Mammary epithelial cell (primary cell): ENCODE measurements at regions of chr4 and their contacts with region 1.

Region 1: DNA sequence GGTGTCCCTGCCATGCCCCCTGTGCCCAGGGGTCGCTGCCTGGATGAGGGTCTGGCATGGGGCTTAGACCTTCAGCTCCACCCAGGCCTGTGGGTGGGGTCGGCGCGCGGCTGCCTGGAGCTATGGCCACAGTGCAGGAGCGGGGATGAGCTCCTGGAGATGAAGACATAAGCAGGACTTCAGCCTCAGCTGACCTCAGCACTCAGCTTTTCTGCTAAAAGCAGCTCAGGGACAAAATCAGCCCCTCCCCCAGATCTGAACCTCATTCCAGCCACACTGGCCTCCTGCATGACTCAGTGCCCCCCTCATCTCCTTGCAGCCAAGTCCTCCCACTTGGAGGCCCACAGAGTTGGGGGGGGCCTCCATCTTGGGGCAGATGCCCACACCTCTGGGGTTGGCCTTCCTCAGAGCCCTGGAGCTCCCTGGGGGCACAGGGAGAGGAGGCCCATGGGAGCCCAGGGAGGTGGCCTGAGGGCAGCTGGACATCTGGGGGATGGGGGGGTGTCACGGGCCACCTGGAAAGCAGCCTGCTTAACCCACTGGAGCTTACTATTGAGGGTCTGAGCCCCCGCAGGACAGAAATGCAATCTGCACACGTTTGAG is 19.4 kb upstream of the CPLX1 start:
- DNase-seq: no peak
- H3K4me3 ChIP-seq: no peak overlapping the region
- H3K27ac ChIP-seq: no peak overlapping the region
- H3K4me1 ChIP-seq: no peaks in the 10 kb centered on the region
- H3K27me3 ChIP-seq: no peaks in the 10 kb centered on the region
- CTCF ChIP-seq: no peak

Region 2: GRCh38 chr4:624705-625590 is 220.4 kb before region 1 on chr4 and contains the start of gene PDE6B:
- CTCF ChIA-PET with region 1: no interaction called
- dilution Hi-C with region 1: loop called (anchors 5 kb)
- in situ Hi-C with region 1: no loop called
- intact Hi-C with region 1: no loop called
- DNase-seq: no peak
- H3K4me3 ChIP-seq: no peak within 1 kb of the TSS
- H3K27ac ChIP-seq: no peak within 1 kb of the TSS
- H3K4me1 ChIP-seq: no peaks in the 10 kb centered on the region
- H3K27me3 ChIP-seq: no peaks in the 10 kb centered on the region
- CTCF ChIP-seq: no peak
- total RNA-seq, gene PDE6B: 3.2 TPM in 1 of 2 donors, not detected in the other

Region 3: GRCh38 chr4:705278-706082 is 139.9 kb before region 1 on chr4 and contains the start of gene PCGF3:
- CTCF ChIA-PET with region 1: no interaction called
- dilution Hi-C with region 1: no loop called
- in situ Hi-C with region 1: no loop called
- intact Hi-C with region 1: no loop called
- DNase-seq: peak; percentile 88
- H3K4me3 ChIP-seq: peak within 1 kb of the TSS; percentile 80 to 98 (median 86)
- H3K27ac ChIP-seq: peak within 1 kb of the TSS; percentile 85
- H3K4me1 ChIP-seq: peaks cover 14% of the 10 kb centered on the region
- H3K27me3 ChIP-seq: no peaks in the 10 kb centered on the region
- CTCF ChIP-seq: no peak
- total RNA-seq, gene PCGF3: 35.0 to 38.2 TPM

Region 4: DNA sequence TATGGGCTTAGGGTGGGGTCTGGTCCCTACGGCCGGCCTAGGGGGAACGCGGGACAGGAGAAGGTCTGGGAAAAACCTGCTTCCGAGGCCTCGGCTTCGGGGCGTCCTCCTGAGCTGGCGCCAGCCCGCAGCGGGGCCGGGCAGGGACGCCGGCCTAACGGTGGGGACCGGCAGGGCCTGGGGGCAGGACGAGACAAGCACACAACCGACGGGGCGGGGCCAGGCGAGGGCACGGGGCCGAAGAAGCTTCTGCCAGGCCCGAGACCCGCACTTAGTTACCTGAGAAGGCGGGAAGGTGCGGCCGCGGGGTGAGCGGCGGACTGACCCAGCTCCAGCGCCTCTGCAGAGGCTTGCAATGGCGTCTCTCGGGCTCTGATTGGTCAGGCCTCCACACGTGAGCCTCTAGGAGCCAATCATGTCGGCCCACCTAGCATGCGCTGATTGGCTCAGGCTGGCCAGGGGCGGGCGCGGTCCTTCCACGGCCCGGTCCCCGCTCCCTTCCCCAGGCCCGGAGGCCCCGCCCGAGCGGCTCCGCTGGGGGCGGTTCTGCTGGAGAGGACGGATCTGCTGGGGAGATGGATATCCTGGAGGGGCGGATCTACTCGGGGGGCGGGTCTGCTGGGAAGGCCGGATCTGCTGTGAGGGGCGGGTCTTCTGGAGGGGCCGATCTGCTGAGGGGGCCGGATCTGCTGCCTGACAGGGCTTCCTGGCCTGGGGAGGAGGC is 63.7 kb before region 1 on chr4:
- CTCF ChIA-PET with region 1: no interaction called
- dilution Hi-C with region 1: loop called (anchors 5 kb)
- in situ Hi-C with region 1: no loop called
- intact Hi-C with region 1: no loop called
- DNase-seq: peak; percentile 100
- H3K4me3 ChIP-seq: peak overlapping the region; percentile 77 to 92 (median 91)
- H3K27ac ChIP-seq: peak overlapping the region; percentile 80
- H3K4me1 ChIP-seq: peaks cover 17% of the 10 kb centered on the region
- H3K27me3 ChIP-seq: peaks cover under 1% of the 10 kb centered on the region
- CTCF ChIP-seq: no peak

Region 5: GRCh38 chr4:931960-932712 is 86.8 kb after region 1 on chr4 and contains the starts of genes GAK and TMEM175:
- CTCF ChIA-PET with region 1: no interaction called
- dilution Hi-C with region 1: loop called (anchors 5 kb)
- in situ Hi-C with region 1: no loop called
- intact Hi-C with region 1: no loop called
- DNase-seq: peak; percentile 96
- H3K4me3 ChIP-seq: peak within 1 kb of the TSS; percentile 43 to 98 (median 98)
- H3K27ac ChIP-seq: peak within 1 kb of the TSS; percentile 63
- H3K4me1 ChIP-seq: peaks cover 21% of the 10 kb centered on the region
- H3K27me3 ChIP-seq: no peaks in the 10 kb centered on the region
- CTCF ChIP-seq: no peak
- total RNA-seq, gene GAK: 59.5 to 109 TPM
- total RNA-seq, gene TMEM175: 12.0 to 21.5 TPM

Region 6: DNA sequence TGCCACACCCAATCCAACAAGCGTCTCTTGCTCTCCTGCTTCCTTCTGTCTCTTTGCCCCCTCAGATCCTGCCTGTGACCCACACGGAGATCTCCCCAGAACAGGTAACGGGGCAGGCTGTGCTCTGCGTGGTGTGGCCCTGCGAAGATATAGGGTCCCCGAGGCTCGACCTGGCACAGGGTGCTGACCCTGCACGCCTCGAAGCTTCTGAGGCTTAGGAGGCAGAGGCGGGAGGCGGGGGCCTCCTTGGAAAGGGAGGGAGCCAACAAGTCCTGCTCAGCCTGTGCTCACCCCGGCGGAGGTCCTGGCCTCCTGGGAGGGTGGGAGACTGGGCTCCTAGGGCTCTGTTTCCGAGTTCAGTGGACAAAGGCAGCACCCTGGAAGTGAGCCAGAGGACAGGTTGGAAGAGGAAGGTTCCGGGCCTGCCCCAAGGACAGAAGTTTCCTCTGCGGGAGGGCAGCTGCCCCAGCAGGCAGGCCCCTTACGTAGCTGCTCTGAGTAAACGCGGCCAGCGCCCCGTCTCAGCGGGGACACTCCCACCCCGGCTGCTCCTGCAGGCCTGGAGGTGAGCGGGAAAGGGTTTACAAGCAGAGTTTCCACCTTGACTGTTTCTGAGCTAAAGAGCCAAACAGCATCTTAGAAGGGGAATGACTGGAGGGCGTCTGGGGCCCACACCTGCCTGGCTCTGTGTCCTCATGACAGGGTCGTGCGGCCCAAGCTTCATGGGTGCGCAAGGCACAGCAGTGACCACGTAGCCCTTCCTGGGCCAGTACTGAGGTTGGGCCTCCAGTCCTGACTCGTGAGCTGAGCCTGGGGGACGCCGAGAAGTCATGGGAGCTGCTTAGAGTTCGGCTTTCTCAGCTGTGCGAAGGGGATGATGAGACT is 103.0 kb after region 1 on chr4:
- CTCF ChIA-PET with region 1: no interaction called
- dilution Hi-C with region 1: no loop called
- in situ Hi-C with region 1: no loop called
- intact Hi-C with region 1: no loop called
- DNase-seq: no peak
- H3K4me3 ChIP-seq: no peak overlapping the region
- H3K27ac ChIP-seq: no peak overlapping the region
- H3K4me1 ChIP-seq: no peaks in the 10 kb centered on the region
- H3K27me3 ChIP-seq: peaks cover 9% of the 10 kb centered on the region
- CTCF ChIP-seq: no peak

Region 7: GRCh38 chr4:1122505-1122904 is 277.2 kb after region 1 on chr4:
- CTCF ChIA-PET with region 1: no interaction called
- dilution Hi-C with region 1: loop called (anchors 5 kb)
- in situ Hi-C with region 1: no loop called
- intact Hi-C with region 1: no loop called
- DNase-seq: no peak
- H3K4me3 ChIP-seq: no peak overlapping the region
- H3K27ac ChIP-seq: no peak overlapping the region
- H3K4me1 ChIP-seq: no peaks in the 10 kb centered on the region
- H3K27me3 ChIP-seq: no peaks in the 10 kb centered on the region
- CTCF ChIP-seq: no peak